ENCODE measurements at regions of chr5 and their contacts with region 1.

Region 1: DNA sequence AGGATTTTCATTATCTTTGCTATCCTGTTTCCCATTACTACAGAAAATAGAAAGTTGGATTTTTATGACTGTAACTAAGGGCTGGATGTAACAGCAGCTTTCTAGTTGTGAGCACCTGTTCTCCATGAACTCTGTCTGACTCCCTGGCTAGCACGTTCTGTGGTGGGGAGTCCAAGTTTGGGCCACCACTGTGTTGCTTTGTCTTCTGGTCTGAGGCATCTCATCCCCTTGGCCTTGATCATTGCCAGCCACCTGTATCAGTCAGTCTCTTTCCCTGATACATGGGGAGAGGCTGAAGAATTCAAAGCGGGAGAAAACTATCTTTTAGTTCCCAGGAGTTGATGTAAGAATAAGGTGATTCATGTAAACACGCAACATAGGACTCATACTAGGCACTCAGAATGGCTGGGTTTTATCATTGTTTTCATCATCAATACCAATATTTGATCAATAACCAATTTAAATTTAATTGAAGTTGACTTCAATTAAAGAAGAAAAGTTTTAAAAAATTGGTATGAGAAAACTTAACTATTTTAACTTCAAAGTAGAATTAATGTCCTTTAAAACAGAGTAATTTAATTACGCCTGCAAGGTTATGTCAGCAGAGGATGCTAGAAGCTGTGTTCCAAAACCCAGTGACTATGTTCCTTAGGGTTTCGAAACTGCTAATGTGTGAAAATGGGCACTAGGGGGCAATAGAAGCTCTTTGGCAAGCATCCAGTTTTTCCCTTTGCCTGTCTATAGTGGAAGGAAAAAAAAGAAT is 33.6 kb downstream of the WDR70 start:
- DNase-seq: peak; percentile 36
- ATAC-seq: peak; percentile 89
- H3K4me3 Mint-ChIP-seq: no peak overlapping the region
- H3K27ac Mint-ChIP-seq: no peak overlapping the region
- H3K4me1 Mint-ChIP-seq: no peaks in the 10 kb centered on the region
- H3K27me3 Mint-ChIP-seq: no peaks in the 10 kb centered on the region
- CTCF ChIP-seq: peak; percentile 59

Region 2: GRCh38 chr5:37184748-37185364 is 227.8 kb before region 1 on chr5:
- CTCF ChIA-PET with region 1: no interaction called
- POLR2A ChIA-PET with region 1: no interaction called
- DNase-seq: no peak
- ATAC-seq: no peak
- H3K4me3 Mint-ChIP-seq: no peak overlapping the region
- H3K27ac Mint-ChIP-seq: no peak overlapping the region
- H3K4me1 Mint-ChIP-seq: no peaks in the 10 kb centered on the region
- H3K27me3 Mint-ChIP-seq: no peaks in the 10 kb centered on the region
- CTCF ChIP-seq: no peak

Region 3: DNA sequence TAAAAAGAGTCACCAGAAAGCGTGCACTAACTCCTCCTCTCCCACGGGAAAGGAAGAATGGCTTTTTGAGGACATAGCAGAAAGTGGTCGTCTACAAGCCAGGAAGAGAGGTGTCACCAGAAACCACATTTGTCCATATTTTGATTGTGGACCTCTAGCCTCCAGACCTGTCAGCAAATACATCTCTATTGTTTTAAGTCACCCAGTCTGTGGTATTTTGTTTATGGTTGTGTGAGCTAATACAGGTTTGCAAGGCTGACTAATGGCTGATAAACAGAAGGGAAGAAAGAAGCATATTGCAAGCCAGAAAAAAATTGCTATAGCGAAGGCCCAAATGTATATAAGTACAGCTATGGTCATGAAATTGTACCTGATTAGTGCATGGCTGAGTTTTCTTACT is 12.2 kb before region 1 on chr5:
- CTCF ChIA-PET with region 1: interaction called, 15 read pairs
- POLR2A ChIA-PET with region 1: no interaction called
- DNase-seq: no peak
- ATAC-seq: no peak
- H3K4me3 Mint-ChIP-seq: no peak overlapping the region
- H3K27ac Mint-ChIP-seq: no peak overlapping the region
- H3K4me1 Mint-ChIP-seq: peaks cover 3% of the 10 kb centered on the region; the same call in 1 of the 2 replicates
- H3K27me3 Mint-ChIP-seq: no peaks in the 10 kb centered on the region
- CTCF ChIP-seq: no peak

Region 4: DNA sequence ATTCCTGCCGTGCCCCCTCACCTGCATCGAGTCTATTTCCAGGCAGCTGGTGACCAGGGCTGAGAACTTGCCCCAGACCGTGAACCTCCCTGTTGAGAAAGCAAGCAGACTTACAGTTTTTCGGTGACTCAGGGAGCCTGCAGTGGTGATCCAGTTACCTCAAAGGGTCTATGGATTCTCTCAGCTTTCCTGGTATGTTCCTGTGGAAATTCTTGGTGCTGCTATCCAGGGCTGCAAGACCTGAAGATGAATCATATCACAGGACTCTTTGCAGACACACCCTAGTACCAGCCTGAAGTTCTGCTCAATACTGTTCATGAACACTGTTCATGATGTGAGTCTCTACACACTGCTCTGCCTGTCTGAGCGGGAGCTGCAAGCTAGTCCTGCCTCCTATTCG is 121.2 kb after region 1 on chr5:
- CTCF ChIA-PET with region 1: no interaction called
- POLR2A ChIA-PET with region 1: no interaction called
- DNase-seq: no peak
- ATAC-seq: no peak
- H3K4me3 Mint-ChIP-seq: no peak overlapping the region
- H3K27ac Mint-ChIP-seq: no peak overlapping the region
- H3K4me1 Mint-ChIP-seq: no peaks in the 10 kb centered on the region
- H3K27me3 Mint-ChIP-seq: no peaks in the 10 kb centered on the region
- CTCF ChIP-seq: no peak

Region 5: DNA sequence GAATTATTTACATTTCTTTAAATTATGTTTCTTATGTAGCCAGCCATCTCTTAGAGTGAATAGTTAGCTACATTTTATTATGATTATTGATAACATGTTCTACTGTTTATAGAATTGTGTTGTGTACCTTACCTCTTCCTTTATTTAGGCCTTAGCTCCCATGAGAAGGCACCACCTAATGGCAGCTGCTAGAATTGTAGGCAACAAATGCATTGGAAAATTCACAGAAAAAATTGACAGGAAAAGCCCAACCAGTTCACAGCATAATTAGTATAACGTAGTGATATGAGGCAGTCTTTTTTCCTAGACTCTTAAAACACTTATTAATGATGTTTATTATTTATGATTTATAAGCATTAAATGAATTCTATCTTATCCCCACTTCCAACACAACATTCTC is 142.2 kb after region 1 on chr5:
- CTCF ChIA-PET with region 1: interaction called, 24 read pairs
- POLR2A ChIA-PET with region 1: no interaction called
- DNase-seq: no peak
- ATAC-seq: peak; percentile 58
- H3K4me3 Mint-ChIP-seq: no peak overlapping the region
- H3K27ac Mint-ChIP-seq: no peak overlapping the region
- H3K4me1 Mint-ChIP-seq: peaks cover 12% of the 10 kb centered on the region
- H3K27me3 Mint-ChIP-seq: no peaks in the 10 kb centered on the region
- CTCF ChIP-seq: 0 out of 2 replicates have a peak, but pooled peaks have one; percentile 33

Region 6: DNA sequence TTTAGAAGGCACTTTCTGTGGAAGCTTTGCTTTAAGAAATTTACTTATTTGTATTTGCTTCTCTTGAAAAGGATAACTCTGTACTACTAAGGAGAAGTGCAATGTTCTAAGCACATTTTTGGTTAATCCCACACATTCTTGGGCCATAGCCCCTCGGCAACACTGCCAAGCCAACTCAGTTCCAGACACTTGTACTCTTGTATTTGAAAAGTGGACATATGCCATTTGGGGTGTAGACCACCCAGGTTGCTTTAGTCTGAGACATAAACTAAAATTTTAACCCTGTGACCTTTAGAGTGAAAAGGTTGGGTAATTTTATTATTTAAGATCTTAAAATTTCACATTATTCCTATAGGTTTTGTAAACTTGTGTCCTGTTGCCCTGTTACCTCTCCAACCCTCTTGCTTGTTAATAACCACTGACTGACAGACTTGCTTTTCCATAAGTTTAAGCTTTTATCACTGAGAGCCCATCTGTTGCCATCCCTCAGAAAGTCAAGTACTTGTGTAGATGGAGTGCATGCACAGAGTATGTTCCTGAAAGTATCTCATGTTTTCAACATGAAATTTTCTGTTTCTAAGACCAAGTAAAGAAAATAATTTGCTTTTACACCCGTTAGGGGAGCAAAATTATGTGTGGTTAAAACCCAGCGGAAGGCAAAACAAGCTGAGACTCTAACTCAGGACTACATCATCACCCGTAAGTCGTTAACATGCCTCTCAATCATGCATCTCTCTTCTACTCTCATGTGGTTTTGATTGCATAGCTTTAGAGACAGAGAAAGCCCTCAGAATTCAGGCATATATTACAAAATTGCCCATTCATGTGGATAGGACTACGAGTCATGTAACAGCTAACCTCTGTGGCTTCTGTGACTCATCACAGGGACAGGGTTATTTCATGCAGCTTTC is 309.8 kb after region 1 on chr5:
- CTCF ChIA-PET with region 1: interaction called, 12 read pairs
- POLR2A ChIA-PET with region 1: no interaction called
- DNase-seq: no peak
- ATAC-seq: no peak
- H3K4me3 Mint-ChIP-seq: no peak overlapping the region
- H3K27ac Mint-ChIP-seq: no peak overlapping the region
- H3K4me1 Mint-ChIP-seq: peaks cover 25% of the 10 kb centered on the region
- H3K27me3 Mint-ChIP-seq: no peaks in the 10 kb centered on the region
- CTCF ChIP-seq: no peak

Region 7: GRCh38 chr5:37837414-37838032 is 424.8 kb after region 1 on chr5:
- CTCF ChIA-PET with region 1: interaction called, 16 read pairs
- POLR2A ChIA-PET with region 1: no interaction called
- DNase-seq: peak; percentile 74
- ATAC-seq: peak; percentile 1; the same call in 1 of the 2 replicates
- H3K4me3 Mint-ChIP-seq: peak overlapping the region; percentile 82
- H3K27ac Mint-ChIP-seq: no peak overlapping the region
- H3K4me1 Mint-ChIP-seq: peaks cover 70% of the 10 kb centered on the region
- H3K27me3 Mint-ChIP-seq: peaks cover 99% of the 10 kb centered on the region
- CTCF ChIP-seq: peak; percentile 64

Region 8: GRCh38 chr5:38193015-38193581 is 780.4 kb after region 1 on chr5:
- CTCF ChIA-PET with region 1: interaction called, 15 read pairs
- POLR2A ChIA-PET with region 1: no interaction called
- DNase-seq: peak; percentile 77
- ATAC-seq: peak; percentile 85
- H3K4me3 Mint-ChIP-seq: no peak overlapping the region
- H3K27ac Mint-ChIP-seq: no peak overlapping the region
- H3K4me1 Mint-ChIP-seq: peaks cover 18% of the 10 kb centered on the region
- H3K27me3 Mint-ChIP-seq: peaks cover 6% of the 10 kb centered on the region; the same call in 1 of the 2 replicates
- CTCF ChIP-seq: peak; percentile 90